ENCODE measurements at regions of chr11 and their contacts with region 1.

Region 1: GRCh38 chr11:47407746-47408590 is at the start of gene SLC39A13:
- DNase-seq: peak; percentile 77 to 97 (median 90)
- ATAC-seq: peak; percentile 88
- H3K4me3 ChIP-seq: peak within 1 kb of the TSS; percentile 70 to 85
- H3K4me3 Mint-ChIP-seq: peak within 1 kb of the TSS; percentile 93
- H3K27ac ChIP-seq: peak within 1 kb of the TSS; percentile 64 to 87
- H3K27ac Mint-ChIP-seq: peak within 1 kb of the TSS; percentile 96
- H3K4me1 ChIP-seq: peaks cover 18% of the 10 kb centered on the region
- H3K4me1 Mint-ChIP-seq: peaks cover 25% of the 10 kb centered on the region
- H3K27me3 ChIP-seq: no peaks in the 10 kb centered on the region
- H3K27me3 Mint-ChIP-seq: no peaks in the 10 kb centered on the region
- CTCF ChIP-seq: peak; percentile 89
- total RNA-seq, gene SLC39A13: 34.0 to 34.6 TPM

Region 2: DNA sequence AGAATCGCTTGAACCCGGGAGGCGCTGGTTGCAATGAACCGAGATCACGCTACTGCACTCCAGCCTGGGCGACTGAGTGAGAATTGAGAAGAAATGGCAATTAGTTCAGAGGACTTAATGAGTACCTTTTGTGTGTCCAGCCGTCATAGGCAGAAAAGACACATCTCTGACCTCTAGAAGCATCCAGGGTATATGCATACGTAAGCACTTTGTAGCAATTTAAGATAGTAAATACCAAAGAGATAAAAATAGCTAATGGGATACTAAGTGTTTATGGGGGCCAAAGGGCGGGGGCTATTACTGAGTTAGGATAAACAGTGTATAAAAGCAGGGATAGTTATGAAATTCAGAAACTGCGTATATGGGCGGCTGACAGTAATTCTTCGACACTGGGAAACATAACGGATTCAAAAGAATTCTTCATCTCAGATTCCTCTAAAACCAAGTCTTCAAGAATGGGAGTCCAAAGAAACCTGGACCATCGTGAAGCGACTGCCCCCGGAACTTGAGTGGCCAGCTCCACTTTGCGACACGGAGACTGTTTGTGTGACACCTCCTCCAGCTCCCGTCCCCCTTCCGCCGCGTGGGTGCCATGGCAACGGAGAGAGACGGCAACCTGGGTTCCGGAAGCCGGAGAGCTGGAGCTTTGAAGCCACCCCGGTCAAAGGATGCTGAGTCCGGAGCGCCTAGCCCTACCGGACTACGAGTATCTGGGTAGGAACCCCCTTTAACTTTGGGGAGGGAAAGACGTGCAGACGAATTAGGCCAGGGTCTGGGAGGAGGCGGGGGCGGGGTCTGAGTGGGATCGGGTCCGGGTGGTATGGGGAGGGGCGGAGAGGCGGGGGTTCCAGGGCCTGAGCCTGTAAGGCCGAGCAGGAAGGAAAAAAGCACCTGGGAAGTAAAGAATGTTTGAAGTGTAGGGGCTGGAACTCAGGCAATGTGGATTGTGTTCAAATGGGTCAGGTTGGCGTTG is 471.5 kb before region 1 on chr11 and contains the start of gene CSTPP1:
- CTCF ChIA-PET with region 1: no interaction called
- POLR2A ChIA-PET with region 1: no interaction called
- intact Hi-C with region 1: loop called in 1 of 2 experiments (anchors 5 kb)
- DNase-seq: peak; percentile 80 to 97 (median 93)
- ATAC-seq: peak; percentile 96
- H3K4me3 ChIP-seq: peak within 1 kb of the TSS; percentile 73 to 82
- H3K4me3 Mint-ChIP-seq: peak within 1 kb of the TSS; percentile 97
- H3K27ac ChIP-seq: peak within 1 kb of the TSS; percentile 58 to 71
- H3K27ac Mint-ChIP-seq: peak within 1 kb of the TSS; percentile 95
- H3K4me1 ChIP-seq: peaks cover 9% of the 10 kb centered on the region
- H3K4me1 Mint-ChIP-seq: peaks cover 20% of the 10 kb centered on the region
- H3K27me3 ChIP-seq: no peaks in the 10 kb centered on the region
- H3K27me3 Mint-ChIP-seq: peaks cover 6% of the 10 kb centered on the region
- CTCF ChIP-seq: no peak
- total RNA-seq, gene CSTPP1: 4.1 to 4.6 TPM

Region 3: DNA sequence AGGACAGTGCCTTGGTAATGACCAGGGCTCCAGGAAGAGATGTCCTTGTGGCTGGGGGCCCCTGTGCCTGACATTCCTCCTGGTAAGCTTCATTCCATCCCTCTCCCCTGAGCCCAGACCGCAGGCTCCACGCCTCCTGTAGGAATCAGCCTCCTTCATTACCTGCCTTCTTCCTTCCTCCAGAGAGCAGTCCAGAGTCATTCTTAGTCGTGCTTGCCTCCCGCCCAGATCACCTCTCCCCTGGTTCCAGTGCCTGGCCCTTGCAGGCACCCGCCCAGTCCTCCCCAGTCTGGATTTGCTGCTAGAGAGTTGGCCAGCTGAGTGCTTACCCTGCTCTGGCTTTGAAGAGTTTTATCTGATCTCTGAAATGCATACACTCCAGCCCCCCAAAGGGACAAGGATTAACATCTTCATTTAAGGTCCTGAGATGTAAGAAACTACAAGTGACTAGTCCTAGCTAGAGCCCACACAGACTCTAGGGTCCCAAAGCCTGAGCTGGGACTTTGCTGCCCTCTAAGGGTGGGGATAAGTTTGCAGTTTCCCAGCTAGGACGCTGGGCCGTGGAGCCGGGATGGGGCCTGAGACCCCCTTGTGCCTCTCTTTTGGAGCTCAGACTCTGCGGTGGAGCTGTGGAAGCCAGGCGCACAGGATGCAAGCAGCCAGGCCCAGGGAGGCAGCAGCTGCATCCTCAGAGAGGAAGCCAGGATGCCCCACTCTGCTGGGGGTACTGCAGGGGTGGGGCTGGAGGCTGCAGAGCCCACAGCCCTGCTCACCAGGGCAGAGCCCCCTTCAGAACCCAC is 148.6 kb before region 1 on chr11:
- CTCF ChIA-PET with region 1: interaction called, 10 read pairs
- POLR2A ChIA-PET with region 1: no interaction called
- intact Hi-C with region 1: no loop called
- DNase-seq: peak in 4 of 9 experiments; percentile 39 to 61 (median 48)
- ATAC-seq: peak; percentile 90
- H3K4me3 ChIP-seq: no peak overlapping the region
- H3K4me3 Mint-ChIP-seq: no peak overlapping the region
- H3K27ac ChIP-seq: no peak overlapping the region
- H3K27ac Mint-ChIP-seq: no peak overlapping the region
- H3K4me1 ChIP-seq: peaks cover 10% of the 10 kb centered on the region
- H3K4me1 Mint-ChIP-seq: peaks cover 10% of the 10 kb centered on the region
- H3K27me3 ChIP-seq: no peaks in the 10 kb centered on the region
- H3K27me3 Mint-ChIP-seq: no peaks in the 10 kb centered on the region
- CTCF ChIP-seq: peak; percentile 23

Region 4: DNA sequence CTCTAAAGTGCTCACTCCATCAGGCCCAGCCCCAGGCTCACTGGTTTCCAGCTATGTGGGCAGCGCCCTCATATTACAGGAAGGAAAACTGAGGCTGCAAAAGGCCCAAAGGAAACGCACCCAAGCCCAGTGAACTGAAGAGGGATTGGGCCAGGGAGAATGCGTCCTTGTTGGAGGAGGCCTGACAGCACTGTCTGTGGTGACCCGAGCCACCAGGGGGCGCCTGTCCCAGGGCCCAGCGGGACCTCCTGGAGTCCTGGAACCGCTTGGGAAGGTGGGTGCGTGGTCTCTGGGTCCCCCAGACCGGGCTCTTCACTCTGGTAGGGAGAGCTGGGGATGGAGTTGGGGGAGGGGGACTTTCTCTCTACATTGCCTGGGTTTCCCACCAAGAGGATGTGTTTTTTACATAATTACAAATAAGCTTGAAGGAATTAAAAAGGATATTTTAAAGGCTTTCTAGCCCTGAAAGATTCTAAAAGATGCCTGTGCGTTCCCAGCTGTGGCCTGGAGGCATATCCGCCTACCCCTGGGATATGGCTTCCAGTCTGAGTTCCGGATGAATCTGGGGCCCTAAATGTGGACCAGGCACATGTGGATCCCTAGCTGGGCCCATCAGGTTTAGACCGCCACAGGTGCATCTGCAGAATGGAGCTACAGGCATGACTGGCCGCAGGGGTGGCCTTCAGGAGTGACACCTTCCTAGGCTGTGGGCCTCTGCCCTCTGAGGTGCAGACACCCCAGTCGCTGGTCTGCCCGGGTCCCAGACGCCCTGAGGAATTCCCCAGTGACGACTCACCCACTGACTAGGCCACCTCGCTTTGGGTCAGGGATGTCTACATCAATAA is 33.9 kb before region 1 on chr11:
- CTCF ChIA-PET with region 1: interaction called, 139 read pairs
- POLR2A ChIA-PET with region 1: interaction called, 7 read pairs
- intact Hi-C with region 1: loop called (anchors 1 kb)
- DNase-seq: peak; percentile 66 to 94 (median 86)
- ATAC-seq: peak; percentile 97
- H3K4me3 ChIP-seq: no peak overlapping the region
- H3K4me3 Mint-ChIP-seq: no peak overlapping the region
- H3K27ac ChIP-seq: no peak overlapping the region
- H3K27ac Mint-ChIP-seq: no peak overlapping the region
- H3K4me1 ChIP-seq: peaks cover 3% of the 10 kb centered on the region
- H3K4me1 Mint-ChIP-seq: peaks cover 9% of the 10 kb centered on the region
- H3K27me3 ChIP-seq: no peaks in the 10 kb centered on the region
- H3K27me3 Mint-ChIP-seq: no peaks in the 10 kb centered on the region
- CTCF ChIP-seq: peak; percentile 91

Region 5: DNA sequence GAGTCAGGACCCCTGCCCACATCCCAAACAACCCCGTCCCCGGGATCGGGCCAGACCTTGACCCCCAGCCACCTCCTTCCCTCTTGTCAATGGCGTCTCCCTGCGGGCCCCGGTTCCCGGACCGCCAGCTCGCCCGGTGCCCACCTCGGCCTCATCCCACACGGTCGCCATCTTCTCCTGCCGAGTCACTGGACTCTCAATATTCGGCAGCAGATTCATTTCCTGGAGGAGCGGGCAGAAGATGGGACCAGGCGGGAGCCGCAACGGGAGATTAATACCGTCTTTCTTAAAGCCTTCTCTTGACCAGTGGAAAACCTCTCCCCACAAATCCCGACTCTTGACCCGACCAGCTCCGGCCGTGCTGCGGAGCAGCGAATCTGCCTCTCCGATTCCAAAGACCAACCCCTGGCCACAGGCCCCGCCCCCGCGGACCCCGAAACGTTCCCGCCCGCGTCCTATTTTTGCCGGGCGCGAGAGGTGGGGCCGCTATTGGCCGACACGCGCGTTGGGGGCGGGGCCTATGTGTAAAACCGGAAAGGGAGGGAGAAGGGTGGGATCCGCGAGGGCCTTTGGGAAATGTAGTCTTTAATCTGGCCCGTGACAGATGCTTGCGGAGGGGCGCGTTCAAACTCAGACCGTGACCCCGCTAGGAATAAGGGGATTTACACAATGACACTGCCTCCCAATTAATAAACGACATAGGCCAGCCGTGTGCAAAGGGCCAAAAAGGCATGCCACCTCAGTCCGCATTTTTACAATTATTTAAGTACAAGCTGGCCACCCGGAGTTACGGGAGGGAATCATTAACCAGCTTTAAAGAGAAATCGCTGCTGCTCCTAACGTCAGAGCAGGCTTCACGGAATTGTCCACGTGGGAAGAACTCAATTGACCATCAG is 18.3 kb after region 1 on chr11 and contains the start of gene PSMC3:
- CTCF ChIA-PET with region 1: interaction called, 17 read pairs
- POLR2A ChIA-PET with region 1: interaction called, 3 read pairs
- intact Hi-C with region 1: loop called (anchors 1 kb)
- DNase-seq: peak; percentile 96 to 99 (median 98)
- ATAC-seq: peak; percentile 98
- H3K4me3 ChIP-seq: peak within 1 kb of the TSS; percentile 68 to 98
- H3K4me3 Mint-ChIP-seq: peak within 1 kb of the TSS; percentile 100
- H3K27ac ChIP-seq: peak within 1 kb of the TSS; percentile 77 to 81
- H3K27ac Mint-ChIP-seq: peak within 1 kb of the TSS; percentile 98
- H3K4me1 ChIP-seq: peaks cover 14% of the 10 kb centered on the region
- H3K4me1 Mint-ChIP-seq: peaks cover 28% of the 10 kb centered on the region
- H3K27me3 ChIP-seq: no peaks in the 10 kb centered on the region
- H3K27me3 Mint-ChIP-seq: no peaks in the 10 kb centered on the region
- CTCF ChIP-seq: no peak
- total RNA-seq, gene PSMC3: 58.1 to 63.4 TPM

Region 6: DNA sequence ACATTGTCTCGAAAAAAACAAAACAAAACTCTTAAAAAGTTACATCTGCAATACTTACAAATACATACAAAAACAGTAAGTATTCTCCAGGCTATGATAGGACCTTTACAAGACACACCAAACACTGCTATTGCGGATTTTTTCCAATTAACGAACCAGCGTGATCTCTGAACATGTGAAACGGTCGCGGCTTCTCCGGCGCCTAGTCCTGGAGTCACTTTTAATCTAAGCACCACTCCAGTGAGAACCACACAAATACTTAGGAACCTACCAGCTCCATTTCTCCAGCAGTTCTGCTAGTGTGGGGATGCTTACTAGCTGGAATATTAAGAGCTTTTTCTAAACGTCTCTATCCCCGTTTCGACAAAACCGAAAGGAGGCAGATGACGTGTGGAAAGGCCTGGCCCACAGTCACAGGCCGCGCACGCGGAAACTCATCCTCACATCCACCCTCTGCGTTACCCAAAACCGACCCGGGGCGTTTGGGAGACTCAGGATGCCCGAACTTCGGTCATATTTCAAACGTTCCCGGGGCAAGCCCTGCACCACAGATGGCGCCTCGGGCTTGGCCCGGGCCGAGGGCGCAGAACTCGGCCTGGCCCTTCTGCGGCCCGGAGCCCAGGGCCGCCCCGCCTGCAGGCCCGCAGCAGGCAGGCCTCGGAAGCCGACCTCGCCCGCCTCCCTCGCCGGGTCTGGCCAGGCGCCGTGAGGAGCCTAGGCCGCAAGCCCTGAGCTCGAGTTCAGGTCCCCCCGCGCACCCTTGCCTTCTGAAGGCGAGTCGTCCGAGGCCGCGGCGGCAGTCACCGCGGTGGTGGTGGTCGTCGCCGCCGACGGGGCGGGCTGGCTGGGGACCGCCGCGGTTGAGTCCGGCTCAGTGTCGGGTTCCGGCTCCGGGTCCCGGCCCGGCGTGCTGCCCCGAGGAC is 358.6 kb after region 1 on chr11:
- CTCF ChIA-PET with region 1: no interaction called
- POLR2A ChIA-PET with region 1: no interaction called
- intact Hi-C with region 1: loop called in 1 of 2 experiments (anchors 10 kb)
- DNase-seq: peak; percentile 48 to 90 (median 74)
- ATAC-seq: peak; percentile 33
- H3K4me3 ChIP-seq: peak overlapping the region; percentile 75 to 79
- H3K4me3 Mint-ChIP-seq: peak overlapping the region; percentile 94
- H3K27ac ChIP-seq: peak overlapping the region; percentile 91 to 97
- H3K27ac Mint-ChIP-seq: peak overlapping the region; percentile 100
- H3K4me1 ChIP-seq: peaks cover 29% of the 10 kb centered on the region
- H3K4me1 Mint-ChIP-seq: peaks cover 31% of the 10 kb centered on the region
- H3K27me3 ChIP-seq: no peaks in the 10 kb centered on the region
- H3K27me3 Mint-ChIP-seq: no peaks in the 10 kb centered on the region
- CTCF ChIP-seq: no peak